ENCODE measurements at regions of chr20 and their contacts with region 1.

Region 1: DNA sequence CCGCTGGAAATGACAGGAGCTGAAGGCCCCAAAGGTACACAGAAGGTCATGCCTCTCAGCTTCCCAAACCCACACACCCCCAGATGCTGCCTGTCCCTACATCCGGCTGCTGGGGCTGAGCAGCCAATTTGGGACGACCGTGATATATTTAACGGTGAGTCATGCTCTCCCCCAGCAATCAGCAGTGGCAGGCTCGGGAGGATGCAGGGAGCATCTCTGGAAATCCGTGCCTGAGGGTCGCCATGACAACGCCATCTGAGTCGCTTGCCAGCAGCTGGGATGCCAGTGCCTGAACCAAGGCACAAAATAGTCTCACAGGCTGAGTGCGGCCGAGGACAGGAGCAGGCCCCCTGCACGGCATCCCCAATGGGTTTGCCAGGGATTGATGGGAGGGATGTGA is 57.9 kb downstream of the KCNB1 start:
- DNase-seq: peak; percentile 45 to 95 (median 84)
- H3K4me3 ChIP-seq: no peak overlapping the region
- H3K27ac ChIP-seq: peak overlapping the region in 56 of 59 donors; percentile 11 to 94 (median 74)
- H3K27me3 ChIP-seq: peaks cover 0 to 5% (median 0%) of the 10 kb centered on the region in 45 donors
- CTCF ChIP-seq: no peak

Region 2: DNA sequence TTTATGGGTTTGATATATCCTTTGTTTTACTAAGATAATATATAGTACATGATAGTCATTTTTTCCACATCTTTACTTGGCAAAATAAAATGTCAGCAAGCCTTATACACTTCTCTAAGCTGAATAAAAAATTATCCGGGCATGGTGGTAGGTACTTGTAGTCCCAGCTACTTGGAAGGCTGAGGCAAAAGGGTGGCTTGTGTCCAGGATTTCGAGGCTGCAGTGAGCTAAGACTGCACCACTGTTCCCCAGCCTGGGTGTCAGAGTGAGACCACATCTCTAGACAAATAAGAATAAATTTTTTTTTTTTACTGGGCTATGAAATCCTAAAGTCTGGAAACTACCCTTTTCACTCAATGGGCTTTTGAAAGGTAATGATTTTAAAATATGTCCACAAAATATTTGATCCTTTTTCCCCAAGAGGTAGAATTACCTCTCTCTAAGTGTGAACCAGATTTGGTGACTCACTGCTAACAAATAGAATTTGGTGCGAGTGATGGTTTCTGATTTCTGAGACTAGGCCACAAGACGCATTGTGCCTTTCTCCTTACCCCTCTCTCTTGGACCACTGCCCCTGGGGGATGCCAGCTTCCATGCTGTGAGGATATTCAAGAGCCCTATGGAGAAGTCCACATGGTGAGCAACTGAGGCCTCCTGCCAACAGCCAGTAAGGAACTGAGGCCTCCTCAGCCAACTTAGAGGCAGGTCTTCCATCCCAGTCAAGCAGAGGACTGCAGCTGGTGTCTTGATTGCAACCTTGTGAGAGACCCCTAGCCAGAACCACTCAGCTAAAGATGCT is 62.5 kb before region 1 on chr20:
- intact Hi-C with region 1: loop called in 1 of 2 experiments (anchors 10 kb)
- DNase-seq: peak in 6 of 10 donors; percentile 39 to 75 (median 57)
- H3K4me3 ChIP-seq: no peak overlapping the region
- H3K27ac ChIP-seq: peak overlapping the region in 55 of 59 donors; percentile 0 to 87 (median 72)
- H3K27me3 ChIP-seq: no peaks in the 10 kb centered on the region
- CTCF ChIP-seq: no peak